GM12878 (cell line): ENCODE measurements at regions of chr14 and their contacts with region 1.

Region 1: DNA sequence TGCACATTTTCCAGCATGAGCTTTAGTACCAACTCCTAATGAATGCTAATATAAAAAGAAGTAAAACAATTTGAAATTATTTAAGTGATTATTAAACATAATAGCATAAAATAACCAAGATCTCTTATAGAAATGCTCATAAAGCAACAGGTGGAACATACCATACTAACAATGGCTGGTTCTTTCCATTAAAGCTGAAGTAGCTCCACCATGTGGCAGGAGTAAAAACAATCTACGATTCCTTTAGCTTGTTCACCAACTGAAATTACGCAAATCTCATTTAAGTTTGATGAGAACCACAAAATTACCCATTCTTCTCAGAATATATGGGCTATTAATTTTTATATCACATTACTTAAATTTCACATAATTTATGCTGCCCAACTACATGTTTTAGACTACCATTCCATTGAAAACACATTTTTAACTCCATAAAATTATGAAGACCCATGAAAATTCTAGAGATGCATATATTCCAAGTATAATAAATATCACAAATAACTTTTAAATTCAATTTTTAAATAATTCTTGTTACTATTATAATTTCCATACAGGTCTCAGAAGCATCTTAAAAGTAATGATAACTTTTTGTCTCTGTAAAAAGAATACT is 213.6 kb downstream of the DAD1 start:
- DNase-seq: no peak
- ATAC-seq: peak; percentile 75
- H3K4me3 ChIP-seq: no peak overlapping the region
- H3K27ac ChIP-seq: no peak overlapping the region
- H3K4me1 ChIP-seq: no peaks in the 10 kb centered on the region
- H3K27me3 ChIP-seq: no peaks in the 10 kb centered on the region
- CTCF ChIP-seq: peak; percentile 50 to 60 (median 50)
- EP300 ChIP-seq: no peak
- POLR2A ChIP-seq: no peak
- RAD21 ChIP-seq: peak; percentile 79

Region 2: GRCh38 chr14:22168092-22168955 is 207.1 kb before region 1 on chr14:
- CTCF ChIA-PET with region 1: no interaction called
- POLR2A ChIA-PET with region 1: no interaction called
- RAD21 ChIA-PET with region 1: interaction called, 5 read pairs
- SMC1A ChIA-PET with region 1: interaction called, 5 read pairs
- in situ Hi-C with region 1: no loop called
- intact Hi-C with region 1: loop called (anchors 5 kb)
- DNase-seq: no peak
- ATAC-seq: peak; percentile 38; the same call in 1 of the 3 replicates
- H3K4me3 ChIP-seq: no peak overlapping the region
- H3K27ac ChIP-seq: no peak overlapping the region
- H3K4me1 ChIP-seq: no peaks in the 10 kb centered on the region
- H3K27me3 ChIP-seq: peaks cover 0 to 2% of the 10 kb centered on the region in 2 experiments; a peak in 1 of 4 replicates
- CTCF ChIP-seq: peak in 1 of 3 experiments; percentile 20; a peak in 2 of 6 replicates
- EP300 ChIP-seq: no peak
- POLR2A ChIP-seq: no peak
- RAD21 ChIP-seq: peak; percentile 23; the same call in 1 of the 2 replicates

Region 3: DNA sequence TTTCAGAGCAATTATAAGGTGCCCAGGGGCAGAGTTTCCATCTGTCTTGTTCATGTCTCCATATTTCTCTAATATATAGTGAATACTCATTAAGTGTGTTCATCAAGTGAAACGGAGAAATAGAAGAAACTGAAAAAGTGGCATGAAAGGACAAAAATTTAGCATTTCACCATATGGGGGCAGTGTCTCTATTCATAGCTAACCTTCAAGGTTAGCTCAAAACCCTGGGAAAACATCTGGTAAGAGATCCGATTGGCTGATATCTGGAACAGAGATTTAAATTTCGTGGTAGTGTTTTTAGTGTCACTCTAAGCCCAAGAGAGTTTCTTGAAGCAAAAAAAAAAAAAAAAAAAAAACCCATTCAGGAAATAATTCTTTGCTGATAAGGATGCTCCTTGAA is 153.9 kb before region 1 on chr14:
- CTCF ChIA-PET with region 1: interaction called, 24 read pairs
- POLR2A ChIA-PET with region 1: no interaction called
- RAD21 ChIA-PET with region 1: interaction called, 13 read pairs
- SMC1A ChIA-PET with region 1: interaction called, 11 read pairs
- in situ Hi-C with region 1: no loop called
- intact Hi-C with region 1: loop called (anchors 5 kb)
- DNase-seq: no peak
- ATAC-seq: peak; percentile 58
- H3K4me3 ChIP-seq: no peak overlapping the region
- H3K27ac ChIP-seq: no peak overlapping the region
- H3K4me1 ChIP-seq: no peaks in the 10 kb centered on the region
- H3K27me3 ChIP-seq: no peaks in the 10 kb centered on the region; a peak in 2 of 4 replicates
- CTCF ChIP-seq: peak; percentile 31 to 49 (median 43); a peak in 4 of 6 replicates
- EP300 ChIP-seq: no peak
- POLR2A ChIP-seq: no peak
- RAD21 ChIP-seq: peak; percentile 25; the same call in 1 of the 2 replicates

Region 4: DNA sequence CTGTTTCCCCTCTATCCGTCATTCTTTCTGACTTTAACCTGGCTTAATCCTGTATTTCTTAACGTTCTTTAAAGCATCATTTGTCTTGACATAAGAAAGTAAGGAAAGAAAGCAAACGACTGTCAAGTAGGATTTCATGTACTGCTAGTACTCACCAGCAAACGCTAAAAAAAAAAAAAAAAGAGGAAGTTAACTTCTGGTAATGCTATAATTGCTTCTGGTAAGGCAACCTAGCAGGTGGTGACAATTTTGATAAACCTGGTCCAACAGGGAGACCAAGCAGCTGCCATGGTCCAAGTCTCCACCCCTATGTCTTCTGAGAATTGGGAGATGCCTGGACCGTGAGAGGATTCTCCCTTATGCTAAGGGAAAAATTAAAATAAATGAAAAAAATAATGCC is 93.0 kb before region 1 on chr14:
- CTCF ChIA-PET with region 1: interaction called, 10 read pairs
- POLR2A ChIA-PET with region 1: no interaction called
- RAD21 ChIA-PET with region 1: interaction called, 6 read pairs
- SMC1A ChIA-PET with region 1: interaction called, 36 read pairs
- in situ Hi-C with region 1: no loop called
- intact Hi-C with region 1: no loop called
- DNase-seq: no peak
- ATAC-seq: peak; percentile 93
- H3K4me3 ChIP-seq: no peak overlapping the region
- H3K27ac ChIP-seq: no peak overlapping the region
- H3K4me1 ChIP-seq: peaks cover 5% of the 10 kb centered on the region; the same call in 1 of the 2 replicates
- H3K27me3 ChIP-seq: peaks cover 0 to 3% of the 10 kb centered on the region in 2 experiments; a peak in 2 of 4 replicates
- CTCF ChIP-seq: no peak
- EP300 ChIP-seq: peak in 1 of 2 experiments; percentile 48; a peak in 1 of 4 replicates
- POLR2A ChIP-seq: no peak
- RAD21 ChIP-seq: no peak

Region 5: DNA sequence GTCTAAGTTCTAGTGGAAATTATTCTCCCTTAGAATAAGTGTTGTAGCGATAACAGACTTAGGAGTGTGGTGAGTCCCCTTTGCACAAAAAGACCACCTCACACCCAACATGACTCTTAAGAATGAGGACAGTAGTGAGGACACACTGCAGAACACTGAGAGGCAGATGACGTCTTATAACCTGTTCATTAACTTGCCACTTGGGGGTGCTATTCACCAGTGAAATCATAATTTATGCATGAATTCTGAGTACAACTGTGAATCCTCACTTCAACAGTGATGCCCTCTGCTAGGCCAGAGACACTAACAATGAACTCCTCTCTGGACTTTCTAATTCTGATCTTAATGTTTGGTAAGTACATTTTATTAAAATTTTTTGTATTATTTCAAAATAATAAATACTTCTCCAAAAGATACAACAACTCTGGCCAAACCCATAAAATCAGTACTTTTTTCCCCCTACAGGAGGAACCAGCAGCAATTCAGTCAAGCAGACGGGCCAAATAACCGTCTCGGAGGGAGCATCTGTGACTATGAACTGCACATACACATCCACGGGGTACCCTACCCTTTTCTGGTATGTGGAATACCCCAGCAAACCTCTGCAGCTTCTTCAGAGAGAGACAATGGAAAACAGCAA is 61.1 kb before region 1 on chr14:
- CTCF ChIA-PET with region 1: interaction called, 333 read pairs
- POLR2A ChIA-PET with region 1: interaction called, 4 read pairs
- RAD21 ChIA-PET with region 1: interaction called, 174 read pairs
- SMC1A ChIA-PET with region 1: interaction called, 238 read pairs
- in situ Hi-C with region 1: loop called (anchors 5 kb)
- intact Hi-C with region 1: loop called (anchors 1 kb)
- DNase-seq: peak; percentile 48
- ATAC-seq: peak; percentile 98
- H3K4me3 ChIP-seq: no peak overlapping the region
- H3K27ac ChIP-seq: no peak overlapping the region
- H3K4me1 ChIP-seq: no peaks in the 10 kb centered on the region
- H3K27me3 ChIP-seq: no peaks in the 10 kb centered on the region
- CTCF ChIP-seq: peak; percentile 55 to 80 (median 69); a peak in 5 of 6 replicates
- EP300 ChIP-seq: no peak
- POLR2A ChIP-seq: no peak
- RAD21 ChIP-seq: peak; percentile 75

Region 6: DNA sequence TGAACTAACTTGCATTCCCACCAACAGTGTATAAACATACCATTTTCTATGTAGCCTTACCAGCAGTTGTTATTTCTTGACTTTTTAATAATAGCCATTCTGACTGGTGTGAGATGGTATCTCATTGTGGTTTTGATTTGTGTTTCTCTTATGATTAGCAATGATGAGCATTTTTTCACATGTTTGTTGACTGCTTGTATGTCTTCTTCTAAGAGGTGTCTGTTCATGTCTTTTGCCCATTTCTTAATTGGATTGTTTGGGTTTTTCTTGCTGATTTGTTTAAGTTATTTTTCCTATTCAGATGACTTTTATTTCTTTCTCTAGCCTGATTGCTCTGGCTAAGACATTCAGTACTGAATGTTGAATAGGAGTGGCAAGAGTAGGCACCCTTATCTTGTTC is 16.7 kb before region 1 on chr14:
- CTCF ChIA-PET with region 1: interaction called, 15 read pairs
- POLR2A ChIA-PET with region 1: no interaction called
- RAD21 ChIA-PET with region 1: interaction called, 3 read pairs
- SMC1A ChIA-PET with region 1: interaction called, 11 read pairs
- in situ Hi-C with region 1: no loop called
- intact Hi-C with region 1: no loop called
- DNase-seq: no peak
- ATAC-seq: no peak
- H3K4me3 ChIP-seq: no peak overlapping the region
- H3K27ac ChIP-seq: no peak overlapping the region
- H3K4me1 ChIP-seq: no peaks in the 10 kb centered on the region
- H3K27me3 ChIP-seq: no peaks in the 10 kb centered on the region
- CTCF ChIP-seq: no peak
- EP300 ChIP-seq: no peak
- POLR2A ChIP-seq: no peak
- RAD21 ChIP-seq: no peak

Region 7: GRCh38 chr14:22539831-22540230 is 164.4 kb after region 1 on chr14:
- CTCF ChIA-PET with region 1: no interaction called
- POLR2A ChIA-PET with region 1: no interaction called
- RAD21 ChIA-PET with region 1: no interaction called
- SMC1A ChIA-PET with region 1: no interaction called
- in situ Hi-C with region 1: no loop called
- intact Hi-C with region 1: no loop called
- DNase-seq: no peak
- ATAC-seq: no peak
- H3K4me3 ChIP-seq: no peak overlapping the region
- H3K27ac ChIP-seq: peak overlapping the region; percentile 34
- H3K4me1 ChIP-seq: peaks cover 47% of the 10 kb centered on the region
- H3K27me3 ChIP-seq: no peaks in the 10 kb centered on the region
- CTCF ChIP-seq: no peak
- EP300 ChIP-seq: no peak
- POLR2A ChIP-seq: no peak
- RAD21 ChIP-seq: no peak